Calu3 (cell line): ENCODE measurements at regions of chr4 and their contacts with region 1.

Region 1: DNA sequence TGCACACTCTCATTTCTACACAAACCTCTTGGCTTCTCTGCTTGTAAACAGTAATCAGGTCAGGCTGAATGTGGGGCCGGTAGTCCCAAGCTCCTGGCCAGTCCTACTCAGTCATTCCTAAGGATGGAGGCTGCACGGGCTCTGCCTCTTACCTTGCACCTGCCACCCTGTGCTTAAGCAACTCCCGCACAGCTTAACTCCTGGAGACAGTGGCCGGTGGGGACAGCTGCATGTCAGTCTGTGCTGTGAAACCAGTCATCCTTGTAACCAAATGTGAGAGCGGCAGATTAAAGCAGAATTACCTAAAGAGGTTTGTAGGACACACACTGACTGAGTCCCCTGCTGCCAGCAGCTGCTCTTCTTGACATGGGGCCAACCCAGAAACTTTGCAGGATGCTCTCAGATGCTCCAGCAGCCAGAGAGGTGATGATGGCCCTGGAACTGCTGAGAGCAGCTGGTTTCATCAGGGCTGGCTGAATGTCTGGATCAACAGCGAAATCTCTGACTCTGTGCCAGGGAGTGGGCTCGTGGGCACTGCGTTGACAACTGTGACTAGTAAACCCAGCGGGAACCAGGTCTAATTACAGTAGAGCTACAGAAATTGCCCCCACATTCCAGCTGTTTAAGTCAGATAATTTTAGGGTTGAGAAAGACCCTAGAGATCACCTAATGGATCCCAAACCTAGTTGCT is 123.7 kb downstream of the ANAPC4 start:
- DNase-seq: no peak
- H3K4me3 Mint-ChIP-seq: no peak overlapping the region
- H3K27ac Mint-ChIP-seq: no peak overlapping the region
- H3K4me1 Mint-ChIP-seq: no peaks in the 10 kb centered on the region
- H3K27me3 Mint-ChIP-seq: no peaks in the 10 kb centered on the region
- CTCF ChIP-seq: no peak

Region 2: DNA sequence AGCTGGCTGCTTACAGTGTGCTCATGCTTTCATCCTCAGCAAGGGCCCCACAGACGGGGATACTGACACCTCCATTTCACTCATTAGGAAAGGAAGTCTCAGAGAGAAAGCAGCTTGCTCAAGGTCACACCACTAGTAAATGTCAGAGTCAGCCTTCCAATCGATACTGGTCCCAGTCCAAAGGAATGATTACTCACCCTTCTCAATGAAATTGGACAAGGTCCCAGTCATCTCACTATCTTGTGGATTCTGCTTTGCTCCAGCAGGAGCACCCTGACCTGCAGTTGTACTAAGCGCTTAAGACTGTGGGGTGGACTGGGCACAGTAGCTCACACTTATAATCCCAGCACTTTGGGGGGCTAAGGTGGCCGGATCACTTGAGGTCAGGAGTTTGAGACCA is 22.6 kb after region 1 on chr4:
- CTCF ChIA-PET with region 1: no interaction called
- intact Hi-C with region 1: no loop called
- DNase-seq: peak; percentile 50
- H3K4me3 Mint-ChIP-seq: no peak overlapping the region
- H3K27ac Mint-ChIP-seq: no peak overlapping the region
- H3K4me1 Mint-ChIP-seq: peaks cover 12% of the 10 kb centered on the region
- H3K27me3 Mint-ChIP-seq: no peaks in the 10 kb centered on the region
- CTCF ChIP-seq: no peak

Region 3: GRCh38 chr4:25767877-25768725 is 267.3 kb after region 1 on chr4:
- CTCF ChIA-PET with region 1: no interaction called
- intact Hi-C with region 1: loop called (anchors 10 kb)
- DNase-seq: peak; percentile 27
- H3K4me3 Mint-ChIP-seq: no peak overlapping the region
- H3K27ac Mint-ChIP-seq: no peak overlapping the region
- H3K4me1 Mint-ChIP-seq: peaks cover 8% of the 10 kb centered on the region
- H3K27me3 Mint-ChIP-seq: no peaks in the 10 kb centered on the region
- CTCF ChIP-seq: peak; percentile 22